ENCODE measurements at regions of chr5 and their contacts with region 1.

Region 1: DNA sequence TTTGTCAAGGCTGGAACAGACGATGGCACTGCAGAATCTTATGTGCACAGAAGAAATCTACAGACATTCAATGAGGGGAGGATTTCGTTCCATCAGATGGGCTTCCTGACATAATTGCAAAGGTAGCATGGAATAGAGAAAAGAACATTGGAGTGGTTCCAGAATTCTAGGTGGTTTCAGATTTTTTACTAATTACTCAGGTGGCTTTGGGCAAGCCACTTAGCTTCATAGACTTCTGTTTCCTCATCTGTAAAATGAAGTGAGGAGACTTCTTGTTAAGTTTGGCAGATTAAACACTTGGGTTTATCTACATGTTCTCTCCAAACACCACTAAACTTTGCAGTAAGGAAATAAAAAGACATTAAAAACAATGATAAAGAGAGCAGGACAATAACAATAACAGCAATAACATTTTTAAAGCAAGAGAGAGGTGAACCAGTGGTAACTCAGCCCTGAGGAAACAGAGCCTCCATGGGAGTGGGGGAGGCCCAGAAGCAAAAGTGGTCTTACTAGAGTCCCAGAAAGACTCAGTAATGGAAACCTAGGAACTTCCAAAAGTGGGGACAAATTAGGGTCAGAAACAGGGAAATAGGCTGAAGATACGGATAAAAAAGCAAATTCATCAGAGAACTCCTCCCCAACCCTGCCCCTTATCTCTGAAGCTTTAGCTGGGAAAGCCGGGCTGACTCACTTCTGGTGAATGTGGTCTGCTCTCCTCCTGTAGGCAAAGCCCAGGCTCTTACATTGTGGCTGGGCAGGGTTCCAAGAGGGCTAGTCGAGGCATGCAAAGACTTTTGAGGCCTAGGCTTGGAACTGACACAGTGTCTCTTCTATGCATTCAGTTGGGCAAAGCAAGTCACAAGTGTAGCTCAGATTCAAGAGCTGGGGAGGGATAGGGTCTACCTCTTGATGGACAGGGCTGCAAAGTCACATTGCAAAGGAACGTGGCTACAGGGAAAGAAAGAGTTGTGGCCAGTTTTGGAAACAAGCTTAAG is 11.8 kb upstream of the ACTBL2 start:
- DNase-seq: peak; percentile 72
- H3K4me3 Mint-ChIP-seq: no peak overlapping the region
- H3K27ac Mint-ChIP-seq: peak overlapping the region; percentile 9
- H3K4me1 Mint-ChIP-seq: peaks cover 34% of the 10 kb centered on the region
- H3K27me3 Mint-ChIP-seq: peaks cover 3% of the 10 kb centered on the region

Region 2: GRCh38 chr5:57383093-57383861 is 111.1 kb before region 1 on chr5:
- CTCF ChIA-PET with region 1: interaction called, 7 read pairs
- POLR2A ChIA-PET with region 1: no interaction called
- intact Hi-C with region 1: loop called (anchors 5 kb)
- DNase-seq: peak; percentile 73
- H3K4me3 Mint-ChIP-seq: peak overlapping the region; percentile 24
- H3K27ac Mint-ChIP-seq: peak overlapping the region; percentile 42
- H3K4me1 Mint-ChIP-seq: peaks cover 11% of the 10 kb centered on the region
- H3K27me3 Mint-ChIP-seq: peaks cover 1% of the 10 kb centered on the region

Region 3: GRCh38 chr5:57435701-57436134 is 58.7 kb before region 1 on chr5:
- CTCF ChIA-PET with region 1: no interaction called
- POLR2A ChIA-PET with region 1: no interaction called
- intact Hi-C with region 1: no loop called
- DNase-seq: no peak
- H3K4me3 Mint-ChIP-seq: no peak overlapping the region
- H3K27ac Mint-ChIP-seq: no peak overlapping the region
- H3K4me1 Mint-ChIP-seq: no peaks in the 10 kb centered on the region
- H3K27me3 Mint-ChIP-seq: no peaks in the 10 kb centered on the region

Measured in activated CD4-positive, alpha-beta memory T cell treated with anti-CD3 and anti-CD28 coated beads for 36 hours (primary cell).